SK-N-SH (cell line): ENCODE measurements at regions of chr5 and their contacts with region 1.

Region 1: GRCh38 chr5:181223058-181223728 is at the start of gene TRIM41:
- DNase-seq: peak; percentile 89
- H3K4me3 ChIP-seq: peak within 1 kb of the TSS; percentile 67 to 86
- H3K27ac ChIP-seq: peak within 1 kb of the TSS; percentile 97 to 98
- H3K4me1 ChIP-seq: peaks cover 0 to 15% of the 10 kb centered on the region in 2 experiments; a peak in 2 of 4 replicates
- H3K27me3 ChIP-seq: no peaks in the 10 kb centered on the region
- CTCF ChIP-seq: peak; percentile 19; the same call in 1 of the 2 replicates
- EP300 ChIP-seq: peak in 1 of 2 experiments; percentile 55; a peak in 1 of 4 replicates
- RAD21 ChIP-seq: 0 out of 2 replicates have a peak, but pooled peaks have one; percentile 9
- polyA plus RNA-seq, gene TRIM41: 35.3 and 35.9 TPM in 2 replicates

Region 2: DNA sequence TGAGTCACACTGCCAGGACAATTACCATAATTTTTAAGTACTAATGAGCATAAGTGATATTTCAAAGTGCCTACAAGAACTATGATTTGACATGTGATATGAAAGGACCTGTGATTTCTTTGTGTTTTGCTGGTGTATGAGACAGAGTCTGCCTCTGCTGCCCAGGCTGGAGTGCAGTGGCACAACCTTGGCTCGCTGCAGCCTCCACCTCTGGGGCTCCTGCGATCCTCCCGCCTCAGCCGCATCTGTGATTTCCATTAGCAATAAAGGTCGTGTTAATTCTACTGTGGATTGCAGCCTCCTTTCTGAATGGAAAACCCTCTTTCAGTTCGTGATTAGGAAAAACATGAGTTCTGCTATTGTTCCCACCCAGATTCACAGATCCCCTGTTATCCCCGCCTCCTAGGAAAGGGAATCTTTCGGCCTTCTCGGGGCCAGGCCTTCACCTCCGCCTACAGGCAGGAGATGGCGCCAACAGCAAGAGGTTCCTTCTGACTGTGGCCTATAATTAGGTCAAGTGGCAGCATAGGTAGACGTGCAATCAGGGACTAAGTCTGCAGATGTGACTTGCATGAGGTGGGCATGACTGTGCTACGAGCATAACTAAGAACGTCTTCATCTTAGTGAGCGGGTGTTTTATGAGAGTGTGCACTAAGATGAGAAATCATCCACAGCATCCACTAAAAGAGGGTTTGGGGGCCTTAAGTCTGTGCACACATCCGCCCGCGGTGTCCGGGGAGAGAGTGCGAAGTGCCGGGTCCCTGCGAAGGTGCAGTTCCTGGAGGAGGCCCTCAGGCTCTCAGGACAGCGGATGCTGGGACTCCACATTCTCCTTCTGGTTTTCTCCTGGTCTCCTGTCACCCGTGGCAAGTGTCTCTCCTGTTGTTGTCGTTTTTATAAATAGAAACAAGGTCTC is 41.3 kb before region 1 on chr5:
- CTCF ChIA-PET with region 1: interaction called, 14 read pairs
- POLR2A ChIA-PET with region 1: interaction called, 8 read pairs
- DNase-seq: peak; percentile 71
- H3K4me3 ChIP-seq: no peak overlapping the region; a peak in 1 of 4 replicates
- H3K27ac ChIP-seq: no peak overlapping the region
- H3K4me1 ChIP-seq: no peaks in the 10 kb centered on the region; a peak in 1 of 4 replicates
- H3K27me3 ChIP-seq: no peaks in the 10 kb centered on the region
- CTCF ChIP-seq: peak; percentile 76
- EP300 ChIP-seq: no peak
- RAD21 ChIP-seq: peak; percentile 83

Region 3: GRCh38 chr5:181191529-181192394 is 31.4 kb before region 1 on chr5:
- CTCF ChIA-PET with region 1: interaction called, 9 read pairs
- POLR2A ChIA-PET with region 1: interaction called, 11 read pairs
- DNase-seq: peak; percentile 95
- H3K4me3 ChIP-seq: peak overlapping the region; percentile 91 to 98
- H3K27ac ChIP-seq: peak overlapping the region; percentile 66 to 89
- H3K4me1 ChIP-seq: peaks cover 0 to 18% of the 10 kb centered on the region in 2 experiments; a peak in 1 of 4 replicates
- H3K27me3 ChIP-seq: no peaks in the 10 kb centered on the region
- CTCF ChIP-seq: no peak
- EP300 ChIP-seq: peak in 1 of 2 experiments; percentile 46; a peak in 1 of 4 replicates
- RAD21 ChIP-seq: no peak

Region 4: DNA sequence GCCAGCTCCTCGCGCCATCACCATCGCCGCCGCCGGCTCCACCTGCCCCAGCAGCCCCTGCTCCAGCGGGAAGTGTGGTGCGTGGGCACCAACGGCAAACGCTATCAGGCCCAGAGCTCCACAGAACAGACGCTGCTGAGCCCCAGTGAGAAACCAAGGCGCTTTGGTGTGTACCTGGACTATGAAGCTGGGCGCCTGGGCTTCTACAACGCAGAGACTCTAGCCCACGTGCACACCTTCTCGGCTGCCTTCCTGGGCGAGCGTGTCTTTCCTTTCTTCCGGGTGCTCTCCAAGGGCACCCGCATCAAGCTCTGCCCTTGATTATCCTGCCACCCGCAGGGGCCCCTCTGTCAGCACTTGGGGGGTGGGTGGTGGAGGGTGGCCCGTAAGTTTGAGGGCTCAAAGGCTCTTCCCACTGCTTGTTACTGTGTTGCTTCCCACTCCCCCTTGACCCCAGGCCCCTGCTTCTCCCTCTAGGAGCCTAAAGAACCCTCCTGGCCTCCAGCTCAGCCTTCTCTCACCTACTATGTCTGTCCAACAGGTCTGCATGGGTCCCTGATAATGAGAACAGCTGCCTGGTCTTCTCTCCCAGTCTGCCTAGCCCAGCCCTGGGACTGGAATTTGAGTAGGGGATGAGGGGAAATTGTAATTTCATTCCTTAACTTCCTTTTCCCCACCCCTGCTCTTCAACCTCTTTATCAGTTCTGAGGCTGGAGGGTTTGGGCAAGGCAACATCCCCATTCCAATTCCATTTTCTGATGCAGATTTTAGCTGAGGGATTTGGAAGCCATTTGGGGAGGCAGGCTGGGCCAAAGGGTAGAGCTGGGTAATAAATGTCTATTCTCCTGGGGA is 11.5 kb after region 1 on chr5:
- CTCF ChIA-PET with region 1: interaction called, 4 read pairs
- POLR2A ChIA-PET with region 1: interaction called, 29 read pairs
- DNase-seq: peak; percentile 48
- H3K4me3 ChIP-seq: no peak overlapping the region
- H3K27ac ChIP-seq: peak overlapping the region; percentile 40 to 57; a peak in 3 of 4 replicates
- H3K4me1 ChIP-seq: peaks cover 0 to 15% of the 10 kb centered on the region in 2 experiments; a peak in 1 of 4 replicates
- H3K27me3 ChIP-seq: no peaks in the 10 kb centered on the region
- CTCF ChIP-seq: no peak
- EP300 ChIP-seq: no peak
- RAD21 ChIP-seq: no peak

Region 5: GRCh38 chr5:181243512-181244343 is 20.5 kb after region 1 on chr5 and contains the start of gene RACK1:
- CTCF ChIA-PET with region 1: interaction called, 3 read pairs
- POLR2A ChIA-PET with region 1: interaction called, 10 read pairs
- DNase-seq: peak; percentile 84
- H3K4me3 ChIP-seq: peak within 1 kb of the TSS; percentile 79 to 82
- H3K27ac ChIP-seq: peak within 1 kb of the TSS; percentile 96 to 98
- H3K4me1 ChIP-seq: peaks cover 20 to 37% of the 10 kb centered on the region in 2 experiments; a peak in 3 of 4 replicates
- H3K27me3 ChIP-seq: no peaks in the 10 kb centered on the region
- CTCF ChIP-seq: no peak
- EP300 ChIP-seq: peak in 1 of 2 experiments; percentile 3; a peak in 1 of 4 replicates
- RAD21 ChIP-seq: no peak
- polyA plus RNA-seq, gene RACK1: 4,191 and 4,715 TPM in 2 replicates